ENCODE measurements at regions of chr3 and their contacts with region 1.

Region 1: GRCh38 chr3:113575206-113575605 is 42.9 kb downstream of the SIDT1 start:
- DNase-seq: no peak
- ATAC-seq: no peak
- H3K4me3 ChIP-seq: no peak overlapping the region
- H3K27ac ChIP-seq: no peak overlapping the region
- H3K4me1 ChIP-seq: peaks cover 0 to 4% (median 0%) of the 10 kb centered on the region in 12 donors
- H3K27me3 ChIP-seq: peaks cover 0 to 6% (median 0%) of the 10 kb centered on the region in 9 donors
- CTCF ChIP-seq: no peak
- POLR2A ChIP-seq: no peak

Region 2: GRCh38 chr3:113423699-113424098 is 151.5 kb before region 1 on chr3:
- intact Hi-C with region 1: no loop called
- DNase-seq: no peak
- ATAC-seq: no peak
- H3K4me3 ChIP-seq: no peak overlapping the region
- H3K27ac ChIP-seq: no peak overlapping the region
- H3K4me1 ChIP-seq: no peaks in the 10 kb centered on the region
- H3K27me3 ChIP-seq: no peaks in the 10 kb centered on the region
- CTCF ChIP-seq: no peak
- POLR2A ChIP-seq: no peak

Region 3: DNA sequence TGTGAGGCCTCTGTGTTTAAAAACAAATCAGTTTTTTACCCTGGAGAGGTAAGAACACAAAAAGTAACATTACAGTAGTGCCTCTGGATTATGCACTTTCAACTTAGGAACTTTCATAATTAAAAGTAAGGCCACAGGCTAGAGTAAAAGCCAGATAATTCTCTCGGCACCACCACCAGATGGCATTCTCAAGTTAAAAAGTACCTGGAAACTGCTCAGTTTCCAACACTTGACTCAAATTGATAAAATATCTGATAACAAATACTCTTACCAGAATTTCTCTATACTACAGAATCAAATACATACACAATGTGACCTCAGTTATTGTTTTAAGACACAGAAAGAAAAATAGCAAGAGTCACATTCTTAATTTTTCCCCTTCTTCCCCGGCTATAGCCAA is 80.2 kb before region 1 on chr3:
- intact Hi-C with region 1: loop called in 7 of 10 experiments (anchors 2 to 5 kb)
- DNase-seq: no peak
- ATAC-seq: no peak
- H3K4me3 ChIP-seq: no peak overlapping the region
- H3K27ac ChIP-seq: no peak overlapping the region
- H3K4me1 ChIP-seq: no peaks in the 10 kb centered on the region
- H3K27me3 ChIP-seq: no peaks in the 10 kb centered on the region
- CTCF ChIP-seq: peak in 11 of 12 donors; percentile 10 to 56 (median 41)
- POLR2A ChIP-seq: no peak

Region 4: DNA sequence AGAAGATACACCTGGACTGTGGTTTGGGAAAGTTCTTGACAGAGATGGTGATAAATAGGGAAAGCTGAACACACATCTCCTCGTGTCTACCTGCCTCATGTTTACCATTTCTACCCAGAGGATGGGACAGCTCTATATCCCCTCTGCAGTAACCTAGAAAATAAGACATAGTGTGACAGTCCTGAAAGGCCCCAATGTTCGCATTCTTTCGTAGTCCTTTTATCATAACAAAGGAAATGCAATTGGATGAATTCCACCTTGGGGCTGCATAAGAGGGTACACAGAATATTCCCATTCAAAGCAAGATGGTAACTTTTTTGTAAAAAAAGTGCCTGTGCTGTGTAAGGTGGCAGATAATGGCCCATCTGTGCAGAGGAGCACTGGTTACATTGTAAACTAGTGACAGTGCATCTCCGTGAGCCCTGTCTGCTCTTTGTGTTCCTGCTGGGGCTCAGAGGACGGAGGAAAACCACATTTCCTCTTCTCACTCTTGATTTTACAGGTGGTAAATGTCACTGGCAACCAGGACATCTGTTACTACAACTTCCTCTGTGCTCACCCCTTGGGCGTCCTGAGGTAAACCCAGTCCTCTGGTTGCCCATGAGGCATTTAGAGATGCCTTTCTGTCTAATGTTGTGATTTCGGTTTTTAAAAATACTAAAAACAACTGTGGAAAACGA is 31.5 kb after region 1 on chr3:
- intact Hi-C with region 1: no loop called
- DNase-seq: no peak
- ATAC-seq: no peak
- H3K4me3 ChIP-seq: no peak overlapping the region
- H3K27ac ChIP-seq: no peak overlapping the region
- H3K4me1 ChIP-seq: no peaks in the 10 kb centered on the region
- H3K27me3 ChIP-seq: no peaks in the 10 kb centered on the region
- CTCF ChIP-seq: no peak
- POLR2A ChIP-seq: no peak

Region 5: DNA sequence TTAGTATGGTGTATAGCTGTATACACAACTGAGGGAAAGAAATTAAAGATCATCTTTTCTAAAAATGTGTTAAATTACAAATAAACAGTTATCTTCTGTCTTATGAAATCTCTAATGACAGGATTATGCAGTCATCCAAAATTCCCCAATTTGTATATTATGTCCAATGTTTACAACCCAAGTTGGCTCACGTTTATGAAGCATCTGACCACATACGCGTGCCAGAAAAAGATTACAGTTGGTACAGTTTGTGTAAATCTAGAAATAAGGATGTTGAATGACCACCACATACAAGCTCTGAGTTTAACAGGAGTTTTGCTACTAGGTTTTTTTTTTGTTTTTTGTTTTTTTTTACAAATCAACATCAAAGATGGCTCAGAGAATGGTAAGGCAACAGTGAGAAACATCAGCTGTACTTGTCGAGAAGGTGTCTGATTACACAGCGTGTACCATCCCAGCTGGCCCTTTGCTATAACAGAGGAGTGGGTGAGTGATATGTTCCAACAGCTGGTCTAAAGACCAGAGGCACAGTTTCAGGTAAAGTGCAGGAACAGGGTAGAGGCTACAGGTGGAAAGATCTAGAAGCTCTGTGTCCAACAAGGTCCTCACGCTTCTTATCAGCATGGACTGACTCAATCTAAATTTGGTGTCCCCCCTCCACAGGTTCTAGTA is 74.1 kb after region 1 on chr3:
- intact Hi-C with region 1: no loop called
- DNase-seq: no peak
- ATAC-seq: peak in 1 of 4 donors; percentile 24
- H3K4me3 ChIP-seq: no peak overlapping the region
- H3K27ac ChIP-seq: no peak overlapping the region
- H3K4me1 ChIP-seq: peaks cover 0 to 15% (median 4%) of the 10 kb centered on the region in 12 donors
- H3K27me3 ChIP-seq: no peaks in the 10 kb centered on the region
- CTCF ChIP-seq: no peak
- POLR2A ChIP-seq: no peak

Region 6: GRCh38 chr3:113745273-113746068 is 170.3 kb after region 1 on chr3:
- intact Hi-C with region 1: no loop called
- DNase-seq: peak; percentile 57 to 77 (median 71)
- ATAC-seq: peak; percentile 52 to 73 (median 70)
- H3K4me3 ChIP-seq: peak overlapping the region; percentile 63 to 95 (median 85)
- H3K27ac ChIP-seq: peak overlapping the region; percentile 94 to 100 (median 98)
- H3K4me1 ChIP-seq: peaks cover 6 to 71% (median 36%) of the 10 kb centered on the region in 12 donors
- H3K27me3 ChIP-seq: no peaks in the 10 kb centered on the region
- CTCF ChIP-seq: peak; percentile 23 to 68 (median 59)
- POLR2A ChIP-seq: no peak

Measured in heart left ventricle (tissue), 16 donors.